ENCODE measurements at regions of chr3 and their contacts with region 1.

Region 1: DNA sequence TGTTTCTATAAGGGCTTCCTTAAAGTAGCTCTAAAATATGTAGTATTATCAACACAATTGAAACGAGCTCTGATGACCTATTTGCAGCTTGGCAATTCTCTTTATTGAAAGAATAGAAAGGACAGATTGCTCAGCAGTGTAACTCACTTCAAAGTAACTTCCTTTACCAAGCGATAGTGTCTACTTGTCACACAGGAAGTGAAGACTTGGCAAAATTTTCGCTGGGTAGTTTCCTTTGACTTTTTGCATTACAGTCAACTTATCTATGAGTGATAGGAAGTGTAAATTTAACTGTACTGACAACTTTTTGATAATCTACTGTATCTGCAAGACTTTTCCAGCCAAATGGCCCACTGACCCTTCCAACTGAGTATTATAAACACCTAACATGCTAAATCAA is 22.8 kb downstream of the SLC9A9 start:
- DNase-seq: no peak
- H3K4me3 Mint-ChIP-seq: no peak overlapping the region
- H3K27ac Mint-ChIP-seq: peak overlapping the region; percentile 76
- H3K4me1 Mint-ChIP-seq: peaks cover 56% of the 10 kb centered on the region
- H3K27me3 Mint-ChIP-seq: no peaks in the 10 kb centered on the region

Region 2: GRCh38 chr3:143809121-143809621 is 16.3 kb before region 1 on chr3:
- CTCF ChIA-PET with region 1: no interaction called
- POLR2A ChIA-PET with region 1: no interaction called
- intact Hi-C with region 1: loop called (anchors 2 kb)
- DNase-seq: no peak
- H3K4me3 Mint-ChIP-seq: no peak overlapping the region
- H3K27ac Mint-ChIP-seq: no peak overlapping the region
- H3K4me1 Mint-ChIP-seq: peaks cover 12% of the 10 kb centered on the region
- H3K27me3 Mint-ChIP-seq: no peaks in the 10 kb centered on the region

Measured in activated CD4-positive, alpha-beta memory T cell treated with anti-CD3 and anti-CD28 coated beads for 36 hours (primary cell).